Gastrocnemius medialis (tissue), 4 donors: ENCODE measurements at regions of chr7 and their contacts with region 1.

Region 1: DNA sequence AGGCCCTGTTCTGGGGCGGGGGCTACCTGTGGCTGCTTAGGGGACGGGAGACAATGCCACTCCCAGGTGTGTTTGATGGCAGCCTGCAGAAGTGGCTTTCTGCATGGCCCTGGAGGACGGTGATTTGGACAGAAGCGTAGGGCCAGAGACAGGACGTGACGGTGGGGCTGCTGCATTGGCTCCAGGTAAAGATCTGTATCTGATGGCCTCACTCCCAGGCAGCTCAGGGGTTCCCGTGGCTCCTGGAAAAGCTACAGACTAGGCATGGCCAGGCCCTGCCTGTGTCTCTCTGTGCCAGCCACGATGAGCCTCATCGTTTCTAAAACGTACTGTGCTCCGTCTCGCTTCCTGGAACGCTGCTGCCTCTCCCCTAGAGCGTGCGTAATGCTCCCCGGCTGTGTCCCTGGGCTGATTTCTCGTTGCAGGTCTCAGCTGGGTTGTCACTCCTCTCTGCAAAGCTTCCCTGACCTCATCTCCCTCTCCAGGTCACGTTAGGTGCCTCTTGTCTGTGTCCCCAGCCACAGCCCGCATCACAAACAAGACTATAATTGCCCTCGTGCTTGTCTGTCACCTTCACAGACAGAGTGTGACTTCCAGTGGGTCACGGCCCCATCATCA is 12.6 kb downstream of the GTF2IRD1 start:
- DNase-seq: peak; percentile 90 to 94
- ATAC-seq: peak; percentile 64 to 76
- H3K4me3 ChIP-seq: peak overlapping the region in 2 of 4 donors; percentile 33 to 44
- H3K27ac ChIP-seq: peak overlapping the region; percentile 93 to 100 (median 100)
- H3K4me1 ChIP-seq: peaks cover 52 to 70% of the 10 kb centered on the region in 2 donors
- H3K27me3 ChIP-seq: no peaks in the 10 kb centered on the region
- CTCF ChIP-seq: no peak
- POLR2A ChIP-seq: peak; percentile 75 to 86

Region 2: DNA sequence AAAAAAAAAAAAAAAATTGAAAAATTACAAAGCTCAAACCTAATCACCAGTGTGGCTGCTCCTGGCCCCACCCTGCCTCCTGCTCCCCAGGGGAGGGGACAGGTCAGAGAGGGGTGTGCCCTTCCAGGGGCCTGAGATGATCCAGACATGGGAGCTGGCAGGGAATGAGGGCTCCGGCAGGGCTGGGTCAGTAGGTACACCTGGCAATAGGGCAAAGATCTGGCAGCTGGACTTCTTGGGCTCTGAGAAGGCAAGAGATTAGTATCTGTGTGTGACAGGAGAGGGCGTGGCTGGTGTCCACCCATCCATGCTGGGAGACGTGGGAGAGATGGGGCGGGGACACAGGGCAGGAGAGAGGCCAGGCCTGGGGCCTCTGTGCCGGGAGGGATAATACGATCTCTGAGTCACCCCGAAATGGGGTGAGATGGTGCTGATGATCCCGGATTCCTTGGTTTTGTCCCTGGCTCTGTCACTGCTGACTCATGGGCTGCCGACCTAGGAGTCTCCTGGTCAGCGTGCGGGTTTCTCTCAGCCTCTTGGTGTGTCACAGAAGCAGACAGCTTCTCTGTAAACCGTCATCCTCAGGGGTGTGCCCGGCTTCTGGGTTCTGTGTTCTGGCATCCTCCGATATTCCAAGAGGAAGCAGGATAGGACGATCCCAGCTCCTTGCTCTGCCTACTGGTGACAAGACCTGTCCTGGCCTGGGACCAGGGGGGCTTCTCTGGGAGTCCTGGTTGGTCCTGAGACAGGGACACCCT is 643.8 kb before region 1 on chr7:
- in situ Hi-C with region 1: no loop called
- intact Hi-C with region 1: no loop called
- DNase-seq: peak in 1 of 2 donors; percentile 53
- ATAC-seq: peak; percentile 44 to 48
- H3K4me3 ChIP-seq: no peak overlapping the region
- H3K27ac ChIP-seq: no peak overlapping the region
- H3K4me1 ChIP-seq: peaks cover 0 to 6% of the 10 kb centered on the region in 2 donors
- H3K27me3 ChIP-seq: no peaks in the 10 kb centered on the region
- CTCF ChIP-seq: no peak
- POLR2A ChIP-seq: no peak

Region 3: GRCh38 chr7:74173866-74174605 is 292.3 kb before region 1 on chr7 and contains the start of gene EIF4H:
- in situ Hi-C with region 1: no loop called
- intact Hi-C with region 1: loop called (anchors 10 kb)
- DNase-seq: peak; percentile 95 to 96
- ATAC-seq: peak; percentile 87 to 90
- H3K4me3 ChIP-seq: peak within 1 kb of the TSS; percentile 91 to 93 (median 92)
- H3K27ac ChIP-seq: peak within 1 kb of the TSS; percentile 94 to 99 (median 95)
- H3K4me1 ChIP-seq: peaks cover 44 to 48% of the 10 kb centered on the region in 2 donors
- H3K27me3 ChIP-seq: no peaks in the 10 kb centered on the region
- CTCF ChIP-seq: peak in 1 of 5 experiments; percentile 42
- POLR2A ChIP-seq: peak; percentile 97
- total RNA-seq, gene EIF4H: 247 to 430 (median 309) TPM

Region 4: GRCh38 chr7:74514131-74514591 is 47.9 kb after region 1 on chr7:
- in situ Hi-C with region 1: no loop called
- intact Hi-C with region 1: no loop called
- DNase-seq: peak; percentile 68 to 78
- ATAC-seq: peak; percentile 93 to 94
- H3K4me3 ChIP-seq: peak overlapping the region in 1 of 4 donors; percentile 6
- H3K27ac ChIP-seq: peak overlapping the region; percentile 90 to 96 (median 94)
- H3K4me1 ChIP-seq: peaks cover 26% of the 10 kb centered on the region in 2 donors
- H3K27me3 ChIP-seq: no peaks in the 10 kb centered on the region
- CTCF ChIP-seq: no peak
- POLR2A ChIP-seq: peak; percentile 49 to 74

Region 5: DNA sequence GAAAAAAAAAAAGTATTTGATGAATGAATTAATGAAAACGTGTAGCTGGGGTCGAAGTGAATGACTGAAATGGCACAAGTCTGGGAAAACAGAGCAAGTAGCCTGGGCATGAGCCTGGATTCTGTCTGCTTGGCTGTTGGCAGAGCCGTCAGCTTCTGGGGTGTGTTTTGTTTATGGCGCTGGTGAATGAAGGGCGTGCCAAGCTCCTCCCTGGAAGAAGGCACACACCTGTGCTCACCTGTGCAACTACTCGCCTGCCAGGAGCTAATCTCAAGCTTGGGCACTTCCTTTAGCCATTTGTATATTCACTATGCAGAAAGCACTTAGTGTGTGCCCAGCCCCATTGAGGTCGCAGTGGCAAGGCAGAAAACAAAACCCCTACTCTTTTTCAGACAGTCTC is 61.5 kb after region 1 on chr7:
- in situ Hi-C with region 1: no loop called
- intact Hi-C with region 1: no loop called
- DNase-seq: no peak
- ATAC-seq: no peak
- H3K4me3 ChIP-seq: no peak overlapping the region
- H3K27ac ChIP-seq: peak overlapping the region in 1 of 4 donors; percentile 21
- H3K4me1 ChIP-seq: no peaks in the 10 kb centered on the region
- H3K27me3 ChIP-seq: no peaks in the 10 kb centered on the region
- CTCF ChIP-seq: no peak
- POLR2A ChIP-seq: no peak